Calu3 (cell line): ENCODE measurements at regions of chr10 and their contacts with region 1.

Region 1: GRCh38 chr10:23230582-23230981 is 38.5 kb downstream of the PTF1A start:
- DNase-seq: no peak
- H3K4me3 Mint-ChIP-seq: no peak overlapping the region
- H3K27ac Mint-ChIP-seq: no peak overlapping the region
- H3K4me1 Mint-ChIP-seq: no peaks in the 10 kb centered on the region
- H3K27me3 Mint-ChIP-seq: peaks cover 36% of the 10 kb centered on the region
- CTCF ChIP-seq: no peak

Region 2: GRCh38 chr10:23081891-23082290 is 148.7 kb before region 1 on chr10:
- CTCF ChIA-PET with region 1: no interaction called
- intact Hi-C with region 1: no loop called
- DNase-seq: no peak
- H3K4me3 Mint-ChIP-seq: no peak overlapping the region
- H3K27ac Mint-ChIP-seq: no peak overlapping the region
- H3K4me1 Mint-ChIP-seq: no peaks in the 10 kb centered on the region
- H3K27me3 Mint-ChIP-seq: peaks cover 36% of the 10 kb centered on the region
- CTCF ChIP-seq: peak; percentile 37

Region 3: DNA sequence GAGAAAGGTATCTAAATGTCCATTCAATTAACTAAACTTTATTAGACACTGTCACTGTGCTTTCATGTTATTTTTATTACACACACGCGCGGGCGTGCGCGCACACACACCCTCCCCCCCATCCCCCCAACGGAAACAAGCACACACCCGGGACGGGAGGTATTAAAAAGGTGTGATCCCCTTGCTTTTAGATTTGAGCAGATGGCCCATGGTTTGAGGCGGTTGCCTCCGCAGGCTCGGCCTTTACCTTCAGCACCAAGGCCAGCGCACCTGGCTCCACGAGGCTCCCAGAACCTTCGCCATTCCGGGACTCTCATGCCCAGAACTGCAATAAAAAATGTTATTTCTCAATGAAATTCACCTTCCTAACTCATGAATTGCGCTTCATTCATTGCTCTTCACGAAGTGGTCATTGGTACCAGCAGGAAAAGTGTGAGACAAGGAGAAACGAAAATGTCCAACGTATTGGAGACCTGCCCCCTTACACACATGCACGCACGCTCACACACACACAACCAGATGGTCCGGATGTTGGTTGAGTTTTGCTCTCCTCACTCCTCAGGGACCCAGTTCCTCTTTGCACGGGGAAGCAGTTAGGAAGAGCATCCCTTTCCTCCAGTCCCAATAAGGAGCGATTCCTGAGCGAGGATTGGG is 59.2 kb before region 1 on chr10:
- CTCF ChIA-PET with region 1: no interaction called
- intact Hi-C with region 1: no loop called
- DNase-seq: no peak
- H3K4me3 Mint-ChIP-seq: no peak overlapping the region
- H3K27ac Mint-ChIP-seq: no peak overlapping the region
- H3K4me1 Mint-ChIP-seq: no peaks in the 10 kb centered on the region
- H3K27me3 Mint-ChIP-seq: peaks cover 87% of the 10 kb centered on the region
- CTCF ChIP-seq: no peak

Region 4: GRCh38 chr10:23186697-23187096 is 43.9 kb before region 1 on chr10:
- CTCF ChIA-PET with region 1: no interaction called
- intact Hi-C with region 1: loop called (anchors 2 kb)
- DNase-seq: no peak
- H3K4me3 Mint-ChIP-seq: no peak overlapping the region
- H3K27ac Mint-ChIP-seq: no peak overlapping the region
- H3K4me1 Mint-ChIP-seq: no peaks in the 10 kb centered on the region
- H3K27me3 Mint-ChIP-seq: peaks cover 46% of the 10 kb centered on the region
- CTCF ChIP-seq: no peak